RWPE1 (cell line): ENCODE measurements at regions of chr13 and their contacts with region 1.

Region 1: DNA sequence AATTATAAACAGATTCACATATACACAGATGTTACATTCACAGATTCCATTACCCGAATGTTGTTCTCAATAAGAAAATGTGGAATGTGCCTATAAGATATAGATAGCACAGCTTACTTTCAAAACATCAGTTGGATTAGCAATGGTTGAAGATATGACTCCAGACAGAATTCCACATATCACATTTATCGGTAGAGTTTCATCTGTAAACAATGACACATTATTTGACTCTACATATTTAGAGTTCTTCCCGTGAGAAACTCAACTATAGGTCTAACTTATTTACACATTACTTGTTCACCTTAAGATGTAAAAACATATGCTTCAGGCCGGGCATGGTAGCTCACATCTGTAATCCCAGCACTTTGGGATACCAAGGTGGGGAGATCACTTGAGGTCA is 14.0 kb downstream of the SLC25A30 start:
- DNase-seq: no peak
- H3K27ac ChIP-seq: no peak overlapping the region
- CTCF ChIP-seq: no peak

Region 2: GRCh38 chr13:45393941-45394570 is 10.2 kb before region 1 on chr13:
- CTCF ChIA-PET with region 1: interaction called, 10 read pairs
- POLR2A ChIA-PET with region 1: no interaction called
- DNase-seq: peak; percentile 80
- H3K27ac ChIP-seq: no peak overlapping the region
- CTCF ChIP-seq: peak; percentile 88